Vagina (tissue), 2 donors: ENCODE measurements at regions of chr5 and their contacts with region 1.

Region 1: DNA sequence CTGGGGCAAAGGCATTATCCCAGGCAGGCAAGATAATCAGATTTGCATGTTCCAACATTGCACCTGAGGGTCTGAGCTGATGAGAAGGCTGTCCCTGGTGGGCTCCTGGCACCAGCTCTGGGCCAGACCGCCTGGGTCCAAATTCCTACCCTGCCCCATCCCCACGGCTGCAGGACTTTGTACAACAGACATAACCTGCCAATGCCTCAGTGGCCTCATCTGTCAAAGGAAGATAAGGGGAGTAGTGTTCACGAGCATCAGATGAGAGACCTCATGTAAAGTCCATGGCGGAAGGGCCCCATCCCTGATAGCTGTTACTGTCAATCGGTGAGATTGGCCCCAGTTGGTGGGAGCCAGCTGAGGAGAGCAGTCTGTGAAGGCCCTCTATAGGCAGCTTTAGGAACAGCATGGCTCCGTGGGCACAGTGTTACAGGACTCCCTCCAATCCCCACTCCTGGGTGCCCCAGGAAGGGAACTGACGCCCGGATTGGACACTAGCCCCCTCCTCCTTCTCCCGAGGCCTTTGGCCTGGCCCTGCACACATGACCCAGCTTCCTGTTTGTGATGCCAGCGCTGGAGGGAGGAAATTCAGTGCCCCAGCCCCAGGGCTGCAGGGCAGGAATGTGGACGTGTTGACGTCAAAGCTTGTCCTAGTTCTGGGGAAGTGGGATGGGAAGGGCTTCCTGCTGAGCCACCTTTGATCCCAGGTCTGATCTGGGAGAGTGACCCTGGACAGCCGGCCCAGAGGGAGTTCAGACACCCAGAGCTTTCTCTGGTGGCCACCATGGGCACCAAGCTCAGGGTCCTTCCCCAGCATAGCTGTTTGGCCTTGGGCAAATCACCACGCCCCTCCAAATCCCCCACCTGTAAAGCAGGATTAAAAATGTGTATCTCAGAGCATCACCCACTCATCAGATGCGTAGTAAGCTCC is 56.2 kb downstream of the DUSP1 start:
- DNase-seq: no peak
- H3K4me3 ChIP-seq: no peak overlapping the region
- H3K27ac ChIP-seq: peak overlapping the region; percentile 55
- H3K4me1 ChIP-seq: peaks cover 34% of the 10 kb centered on the region
- H3K27me3 ChIP-seq: no peaks in the 10 kb centered on the region
- CTCF ChIP-seq: peak; percentile 38 to 81 (median 68)
- POLR2A ChIP-seq: no peak

Region 2: GRCh38 chr5:172770675-172771438 is 56.1 kb after region 1 on chr5 and contains the start of gene DUSP1:
- intact Hi-C with region 1: loop called (anchors 2 kb)
- DNase-seq: no peak
- H3K4me3 ChIP-seq: peak within 1 kb of the TSS; percentile 91 to 99
- H3K27ac ChIP-seq: peak within 1 kb of the TSS; percentile 98
- H3K4me1 ChIP-seq: peaks cover 72% of the 10 kb centered on the region
- H3K27me3 ChIP-seq: no peaks in the 10 kb centered on the region
- CTCF ChIP-seq: peak in 1 of 3 experiments; percentile 35
- POLR2A ChIP-seq: peak in 1 of 2 donors; percentile 100
- total RNA-seq, gene DUSP1: 2,876 TPM

Region 3: DNA sequence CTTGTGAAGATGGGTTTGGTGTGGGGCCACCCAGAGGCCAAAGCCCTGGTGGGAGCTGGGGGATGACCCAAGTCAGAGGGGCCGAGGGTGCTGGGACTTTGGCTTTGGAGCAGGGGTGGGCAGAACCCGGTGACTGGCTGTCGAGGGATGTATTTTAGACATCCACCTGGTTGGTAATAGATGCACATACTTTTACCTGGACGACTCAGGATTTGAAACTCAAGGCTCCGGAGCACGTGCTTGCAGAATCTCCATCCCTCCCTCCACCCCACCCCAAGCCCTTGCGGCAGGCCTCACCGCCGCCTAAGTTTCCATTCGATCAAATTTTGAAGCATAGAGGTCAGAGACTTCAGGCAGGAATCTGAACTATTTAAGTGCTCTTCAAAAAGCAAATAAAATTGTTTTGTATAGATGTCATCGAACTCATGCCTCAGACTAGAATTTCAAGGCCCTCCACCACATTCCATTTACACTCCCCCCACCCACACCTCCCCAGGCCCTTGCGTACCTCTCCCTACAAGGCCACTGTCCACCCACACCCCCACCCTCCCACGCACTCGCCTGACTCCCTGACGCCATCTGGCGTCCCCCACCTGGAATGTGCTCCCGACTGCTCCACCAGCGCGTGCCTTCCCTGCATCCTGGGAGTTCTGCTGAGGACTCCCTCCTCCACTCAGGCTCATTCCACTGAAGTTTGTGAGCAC is 187.9 kb after region 1 on chr5:
- intact Hi-C with region 1: loop called (anchors 10 kb)
- DNase-seq: no peak
- H3K4me3 ChIP-seq: no peak overlapping the region
- H3K27ac ChIP-seq: peak overlapping the region; percentile 95
- H3K4me1 ChIP-seq: peaks cover 95% of the 10 kb centered on the region
- H3K27me3 ChIP-seq: no peaks in the 10 kb centered on the region
- CTCF ChIP-seq: no peak
- POLR2A ChIP-seq: no peak

Region 4: GRCh38 chr5:172932313-172933017 is 217.7 kb after region 1 on chr5:
- intact Hi-C with region 1: loop called (anchors 1 kb)
- DNase-seq: no peak
- H3K4me3 ChIP-seq: no peak overlapping the region
- H3K27ac ChIP-seq: peak overlapping the region; percentile 56
- H3K4me1 ChIP-seq: peaks cover 11% of the 10 kb centered on the region
- H3K27me3 ChIP-seq: no peaks in the 10 kb centered on the region
- CTCF ChIP-seq: peak; percentile 94 to 99 (median 97)
- POLR2A ChIP-seq: no peak

Region 5: DNA sequence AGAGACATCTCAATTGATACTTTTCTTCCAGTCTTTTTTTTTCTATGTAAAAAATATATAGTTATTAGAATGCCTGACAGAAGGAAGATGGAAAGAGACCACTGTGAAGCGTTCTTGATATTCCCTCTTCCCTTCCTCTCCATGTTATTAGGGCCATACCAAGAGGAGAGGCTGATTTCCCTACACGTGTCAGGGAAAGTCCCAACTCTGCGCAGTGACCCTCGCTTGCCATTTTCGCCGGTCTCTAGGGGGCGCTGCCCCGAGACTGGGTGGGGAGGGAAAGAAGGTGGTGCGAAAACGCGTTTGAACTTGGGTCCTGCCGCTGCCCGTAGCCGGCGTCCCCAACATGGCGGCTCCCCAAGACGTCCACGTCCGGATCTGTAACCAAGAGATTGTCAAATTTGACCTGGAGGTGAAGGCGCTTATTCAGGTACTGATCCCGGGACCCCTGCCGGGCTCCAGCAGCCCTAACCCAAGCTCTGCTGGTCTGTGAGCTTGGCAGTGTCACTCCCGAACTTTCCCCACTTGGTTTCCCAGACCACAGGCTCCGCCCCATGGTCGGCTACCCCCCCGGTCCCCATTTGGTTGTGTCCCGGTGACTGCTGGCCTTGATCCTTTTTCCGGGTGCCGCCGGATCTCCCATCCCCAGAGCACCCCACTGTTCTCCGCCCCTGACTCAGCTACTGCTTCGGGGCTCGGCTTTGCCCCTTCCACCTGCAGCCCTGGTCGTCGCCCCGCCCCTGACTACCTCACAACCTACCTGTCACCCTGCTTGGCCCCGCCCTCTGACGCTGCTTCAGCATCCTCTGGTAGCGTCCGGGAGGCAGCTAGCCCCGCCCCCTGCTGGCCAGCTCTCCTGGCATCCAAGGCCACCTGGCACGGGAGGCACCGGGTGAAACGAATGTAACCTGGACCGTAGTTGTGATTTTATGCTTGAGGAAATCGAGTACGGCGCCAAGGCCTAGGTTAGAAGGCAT is 429.7 kb after region 1 on chr5 and contains the start of gene BNIP1:
- intact Hi-C with region 1: loop called (anchors 10 kb)
- DNase-seq: peak in 1 of 2 donors; percentile 91
- H3K4me3 ChIP-seq: peak within 1 kb of the TSS; percentile 55 to 65
- H3K27ac ChIP-seq: peak within 1 kb of the TSS; percentile 84
- H3K4me1 ChIP-seq: peaks cover 9% of the 10 kb centered on the region
- H3K27me3 ChIP-seq: no peaks in the 10 kb centered on the region
- CTCF ChIP-seq: peak; percentile 84 to 91 (median 88)
- POLR2A ChIP-seq: no peak
- total RNA-seq, gene BNIP1: 12.5 TPM